Activated naive CD8-positive, alpha-beta T cell treated with anti-CD3 and anti-CD28 coated beads, Interleukin-2, amount 10 ng/mL, durations not matched to agents 7 days and 5 days (primary cell): ENCODE measurements at regions of chr21 and their contacts with region 1.

Region 1: GRCh38 chr21:42513985-42514882 is 582 bp downstream of the SLC37A1 start:
- DNase-seq: peak; percentile 76
- ATAC-seq: peak; percentile 73
- H3K4me3 Mint-ChIP-seq: peak overlapping the region; percentile 87
- H3K27ac Mint-ChIP-seq: peak overlapping the region; percentile 84
- H3K4me1 Mint-ChIP-seq: peaks cover 31% of the 10 kb centered on the region
- H3K27me3 Mint-ChIP-seq: peaks cover 2% of the 10 kb centered on the region

Region 2: GRCh38 chr21:42527489-42528158 is 13.4 kb after region 1 on chr21:
- POLR2A ChIA-PET with region 1: interaction called, 32 read pairs
- DNase-seq: peak; percentile 58
- ATAC-seq: peak; percentile 87
- H3K4me3 Mint-ChIP-seq: peak overlapping the region; percentile 75
- H3K27ac Mint-ChIP-seq: peak overlapping the region; percentile 96
- H3K4me1 Mint-ChIP-seq: peaks cover 41% of the 10 kb centered on the region
- H3K27me3 Mint-ChIP-seq: no peaks in the 10 kb centered on the region